A673 (cell line): ENCODE measurements at regions of chr12 and their contacts with region 1.

Region 1: DNA sequence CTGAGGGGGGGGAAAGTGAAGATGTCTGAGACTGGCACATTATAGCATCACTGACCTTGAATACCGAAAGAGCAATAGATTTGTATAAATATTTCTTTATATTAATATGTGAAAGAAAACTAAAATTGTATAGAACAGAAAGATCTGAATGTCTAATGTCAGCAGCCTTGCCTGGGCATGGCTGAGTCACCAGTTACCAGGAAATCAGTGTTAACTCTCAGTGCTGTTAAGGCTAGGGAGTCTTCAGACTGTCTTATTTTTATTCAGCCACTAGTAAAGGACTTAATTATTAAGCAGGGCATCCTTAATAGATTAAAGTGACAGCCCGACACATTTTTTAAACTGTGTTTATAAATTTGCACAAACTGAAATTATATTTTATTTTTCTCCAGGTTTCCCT is 122.9 kb upstream of the AEBP2 start:
- DNase-seq: no peak
- H3K4me3 ChIP-seq: no peak overlapping the region
- H3K27ac ChIP-seq: no peak overlapping the region
- H3K4me1 ChIP-seq: no peaks in the 10 kb centered on the region
- H3K27me3 ChIP-seq: no peaks in the 10 kb centered on the region
- CTCF ChIP-seq: no peak

Region 2: DNA sequence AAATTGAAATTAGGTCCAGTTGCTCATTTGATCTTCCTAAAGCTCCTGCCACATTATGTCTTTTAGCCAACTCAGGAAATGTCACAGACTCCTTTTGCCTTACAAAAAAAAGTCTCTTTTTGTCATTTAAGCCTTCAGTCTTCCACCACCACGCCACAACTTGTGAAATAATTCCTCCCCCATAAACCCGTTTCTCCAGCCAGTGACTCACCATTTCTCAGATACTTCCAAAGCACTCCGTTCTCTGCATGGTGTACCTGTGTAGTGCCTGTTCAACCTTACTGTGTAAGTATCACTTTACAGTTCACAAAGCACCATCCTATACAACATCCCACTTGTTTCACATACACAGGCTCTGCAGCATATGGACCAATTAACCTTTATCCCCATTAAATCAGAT is 16.7 kb before region 1 on chr12:
- CTCF ChIA-PET with region 1: no interaction called
- POLR2A ChIA-PET with region 1: interaction called, 12 read pairs
- intact Hi-C with region 1: no loop called
- DNase-seq: peak; percentile 35
- H3K4me3 ChIP-seq: no peak overlapping the region
- H3K27ac ChIP-seq: peak overlapping the region; percentile 38
- H3K4me1 ChIP-seq: peaks cover 41% of the 10 kb centered on the region
- H3K27me3 ChIP-seq: no peaks in the 10 kb centered on the region
- CTCF ChIP-seq: no peak

Region 3: DNA sequence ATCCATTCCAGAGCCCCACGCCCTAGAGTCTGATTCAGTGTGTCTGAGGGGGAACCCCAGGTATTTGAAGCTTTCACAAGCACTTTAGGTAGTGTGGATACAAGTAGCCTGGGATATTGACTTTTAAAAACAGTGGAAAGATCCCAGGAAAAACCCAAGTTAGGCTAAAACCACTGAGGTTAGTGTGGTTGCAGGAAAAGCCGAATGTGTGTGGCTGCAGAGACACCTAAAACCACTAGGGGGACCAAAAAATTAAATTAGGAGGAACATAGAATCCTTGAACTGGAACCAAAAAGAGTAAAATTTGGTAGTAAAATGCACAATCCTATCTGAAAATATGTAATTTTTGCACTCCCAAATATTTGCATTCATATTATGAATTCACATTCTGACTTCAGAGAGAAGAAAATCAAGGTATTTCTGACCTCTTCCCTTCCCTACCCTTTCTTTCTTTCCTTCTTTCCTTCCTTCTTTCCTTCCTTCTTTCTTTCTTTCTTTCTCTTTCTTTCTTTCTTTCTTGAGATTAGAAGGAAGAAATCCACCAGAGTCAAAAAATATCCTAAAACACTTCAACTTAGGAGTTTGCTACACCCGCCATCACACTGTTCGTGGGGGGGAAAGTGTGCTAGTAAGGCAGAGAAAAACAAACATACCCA is 1980.5 kb after region 1 on chr12:
- CTCF ChIA-PET with region 1: no interaction called
- POLR2A ChIA-PET with region 1: no interaction called
- intact Hi-C with region 1: no loop called
- DNase-seq: peak; percentile 15
- H3K4me3 ChIP-seq: no peak overlapping the region
- H3K27ac ChIP-seq: no peak overlapping the region
- H3K4me1 ChIP-seq: no peaks in the 10 kb centered on the region
- H3K27me3 ChIP-seq: peaks cover 7% of the 10 kb centered on the region
- CTCF ChIP-seq: peak; percentile 75